H1 (cell line): ENCODE measurements at regions of chr12 and their contacts with region 1.

Region 1: GRCh38 chr12:55073043-55074022 is 52.9 kb upstream of the OR9K2 start:
- DNase-seq: peak in 1 of 2 experiments; percentile 81
- H3K4me3 ChIP-seq: no peak overlapping the region
- H3K27ac ChIP-seq: no peak overlapping the region
- H3K4me1 ChIP-seq: no peaks in the 10 kb centered on the region
- H3K27me3 ChIP-seq: no peaks in the 10 kb centered on the region
- CTCF ChIP-seq: peak; percentile 34 to 86 (median 74)
- EP300 ChIP-seq: no peak
- POLR2A ChIP-seq: no peak
- RAD21 ChIP-seq: peak; percentile 96

Region 2: DNA sequence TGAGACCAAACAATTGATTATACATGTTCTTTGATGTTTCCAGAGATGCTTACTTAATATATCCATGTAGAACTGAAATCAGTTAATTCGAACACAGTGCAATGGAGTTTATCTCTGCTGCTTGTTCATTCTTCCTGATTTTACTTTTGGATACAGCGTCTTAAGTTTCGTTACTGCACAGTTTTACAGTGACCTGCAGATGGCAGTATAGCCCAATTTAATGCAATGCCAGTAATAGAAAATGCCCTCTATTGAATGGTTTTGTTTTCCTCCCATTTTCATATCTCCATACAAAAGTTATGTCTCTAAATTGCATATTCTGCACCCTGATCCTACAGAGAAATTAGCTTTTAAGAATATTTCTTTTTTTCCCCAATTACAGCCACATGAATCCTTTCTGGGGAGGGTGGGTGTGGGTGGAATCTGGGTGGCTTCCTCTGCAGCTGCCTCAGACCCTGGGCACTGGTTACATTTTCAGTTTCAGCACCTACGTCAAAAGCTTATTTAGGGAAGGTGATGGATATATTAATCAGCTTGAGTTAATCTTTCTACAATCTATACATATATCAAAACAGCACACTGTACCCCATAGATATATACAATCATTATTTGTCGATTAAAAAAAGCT is 324.0 kb before region 1 on chr12:
- CTCF ChIA-PET with region 1: interaction called, 49 read pairs
- POLR2A ChIA-PET with region 1: no interaction called
- DNase-seq: no peak
- H3K4me3 ChIP-seq: no peak overlapping the region
- H3K27ac ChIP-seq: no peak overlapping the region
- H3K4me1 ChIP-seq: no peaks in the 10 kb centered on the region
- H3K27me3 ChIP-seq: no peaks in the 10 kb centered on the region
- CTCF ChIP-seq: peak in 2 of 3 experiments; percentile 52 to 71; a peak in 2 of 4 replicates
- EP300 ChIP-seq: no peak
- POLR2A ChIP-seq: no peak
- RAD21 ChIP-seq: peak; percentile 79 to 81

Region 3: GRCh38 chr12:54967461-54967860 is 105.9 kb before region 1 on chr12:
- CTCF ChIA-PET with region 1: interaction called, 22 read pairs
- POLR2A ChIA-PET with region 1: no interaction called
- DNase-seq: no peak
- H3K4me3 ChIP-seq: no peak overlapping the region
- H3K27ac ChIP-seq: no peak overlapping the region
- H3K4me1 ChIP-seq: no peaks in the 10 kb centered on the region
- H3K27me3 ChIP-seq: no peaks in the 10 kb centered on the region
- CTCF ChIP-seq: no peak
- EP300 ChIP-seq: no peak
- POLR2A ChIP-seq: no peak
- RAD21 ChIP-seq: no peak

Region 4: GRCh38 chr12:54993161-54993835 is 80.0 kb before region 1 on chr12:
- CTCF ChIA-PET with region 1: interaction called, 627 read pairs
- POLR2A ChIA-PET with region 1: interaction called, 12 read pairs
- DNase-seq: peak in 1 of 2 experiments; percentile 55
- H3K4me3 ChIP-seq: no peak overlapping the region
- H3K27ac ChIP-seq: no peak overlapping the region
- H3K4me1 ChIP-seq: peaks cover 1 to 11% (median 7%) of the 10 kb centered on the region in 4 experiments; a peak in 5 of 7 replicates
- H3K27me3 ChIP-seq: no peaks in the 10 kb centered on the region
- CTCF ChIP-seq: peak in 2 of 3 experiments; percentile 75 to 88; a peak in 3 of 4 replicates
- EP300 ChIP-seq: no peak
- POLR2A ChIP-seq: no peak
- RAD21 ChIP-seq: peak; percentile 94 to 97

Region 5: GRCh38 chr12:55034218-55034617 is 39.1 kb before region 1 on chr12:
- CTCF ChIA-PET with region 1: interaction called, 17 read pairs
- POLR2A ChIA-PET with region 1: interaction called, 3 read pairs
- DNase-seq: no peak
- H3K4me3 ChIP-seq: no peak overlapping the region
- H3K27ac ChIP-seq: no peak overlapping the region
- H3K4me1 ChIP-seq: peaks cover 0 to 2% (median 0%) of the 10 kb centered on the region in 4 experiments; a peak in 1 of 7 replicates
- H3K27me3 ChIP-seq: no peaks in the 10 kb centered on the region
- CTCF ChIP-seq: no peak
- EP300 ChIP-seq: no peak
- POLR2A ChIP-seq: no peak
- RAD21 ChIP-seq: no peak

Region 6: GRCh38 chr12:55060470-55060869 is 12.9 kb before region 1 on chr12:
- CTCF ChIA-PET with region 1: interaction called, 28 read pairs
- POLR2A ChIA-PET with region 1: interaction called, 3 read pairs
- DNase-seq: no peak
- H3K4me3 ChIP-seq: no peak overlapping the region
- H3K27ac ChIP-seq: no peak overlapping the region
- H3K4me1 ChIP-seq: peaks cover 0 to 6% (median 0%) of the 10 kb centered on the region in 4 experiments; a peak in 2 of 7 replicates
- H3K27me3 ChIP-seq: no peaks in the 10 kb centered on the region
- CTCF ChIP-seq: no peak
- EP300 ChIP-seq: no peak
- POLR2A ChIP-seq: no peak
- RAD21 ChIP-seq: no peak

Region 7: DNA sequence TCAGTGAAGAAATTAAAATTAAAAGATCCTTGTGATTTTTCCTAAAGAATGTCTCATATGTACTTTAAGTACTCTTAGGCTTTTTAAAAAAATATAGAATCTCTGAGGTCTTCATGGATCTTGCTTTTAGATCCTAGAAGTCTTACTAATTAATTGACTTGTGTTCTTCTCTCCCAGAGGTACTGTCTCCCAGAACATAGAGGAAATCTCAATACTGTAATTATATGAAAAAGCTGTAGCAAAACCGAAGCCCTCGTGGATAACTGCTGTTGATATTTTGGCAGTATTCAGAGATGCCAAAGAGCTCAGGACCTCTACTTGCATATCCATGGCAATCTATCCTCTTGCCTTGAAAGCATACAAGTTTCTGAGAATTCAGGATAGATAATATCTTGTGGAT is 52.8 kb after region 1 on chr12 and contains the start of gene OR9K2:
- CTCF ChIA-PET with region 1: no interaction called
- POLR2A ChIA-PET with region 1: no interaction called
- DNase-seq: no peak
- H3K4me3 ChIP-seq: no peak within 1 kb of the TSS
- H3K27ac ChIP-seq: no peak within 1 kb of the TSS
- H3K4me1 ChIP-seq: no peaks in the 10 kb centered on the region
- H3K27me3 ChIP-seq: no peaks in the 10 kb centered on the region
- CTCF ChIP-seq: no peak
- EP300 ChIP-seq: no peak
- POLR2A ChIP-seq: no peak
- RAD21 ChIP-seq: no peak
- total RNA-seq, gene OR9K2: not detected in 2 replicates